Testis (tissue), 5 donors: ENCODE measurements at regions of chr9 and their contacts with region 1.

Region 1: DNA sequence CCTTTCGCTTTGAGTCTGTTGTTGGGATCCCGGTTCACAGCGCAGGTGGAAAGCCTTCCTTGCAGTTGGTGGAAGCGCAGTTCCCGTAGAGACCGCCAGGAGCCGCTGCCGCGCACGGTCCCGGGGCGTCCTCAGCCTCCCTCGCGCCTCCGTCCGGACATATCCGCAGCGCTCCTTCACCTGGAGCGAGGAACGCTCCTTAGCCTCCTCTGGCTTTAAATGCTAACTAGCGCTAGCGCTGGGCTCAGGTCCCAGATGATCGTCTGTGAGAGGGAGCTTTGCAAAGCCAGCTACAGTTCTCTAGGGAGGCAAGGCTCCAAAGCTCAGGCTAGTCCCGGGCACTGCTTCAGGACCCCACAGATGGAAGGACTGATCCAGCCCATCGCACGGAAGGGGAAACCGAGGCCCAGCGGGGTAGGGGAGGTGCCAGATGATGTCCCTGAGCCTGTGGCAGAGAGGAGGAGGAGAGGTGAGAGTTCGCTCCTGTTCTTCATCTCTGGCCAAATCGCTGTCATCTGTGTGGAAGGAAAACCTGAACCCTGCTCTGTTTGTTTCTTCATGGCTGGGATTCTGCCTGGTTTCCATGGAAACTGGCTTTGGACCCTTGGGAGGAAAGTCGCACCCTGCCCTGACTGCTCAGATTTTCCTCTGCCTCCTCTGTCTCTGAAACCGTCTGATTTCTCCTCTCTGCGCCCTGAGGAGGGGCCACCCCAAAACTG is 31.4 kb downstream of the COL15A1 start:
- DNase-seq: peak; percentile 90
- H3K4me3 ChIP-seq: peak overlapping the region in 1 of 2 donors; percentile 32
- H3K27ac ChIP-seq: peak overlapping the region in 1 of 2 donors; percentile 72
- H3K4me1 ChIP-seq: peaks cover 57% of the 10 kb centered on the region
- H3K27me3 ChIP-seq: no peaks in the 10 kb centered on the region
- CTCF ChIP-seq: peak; percentile 89 to 98 (median 91)
- POLR2A ChIP-seq: no peak

Region 2: DNA sequence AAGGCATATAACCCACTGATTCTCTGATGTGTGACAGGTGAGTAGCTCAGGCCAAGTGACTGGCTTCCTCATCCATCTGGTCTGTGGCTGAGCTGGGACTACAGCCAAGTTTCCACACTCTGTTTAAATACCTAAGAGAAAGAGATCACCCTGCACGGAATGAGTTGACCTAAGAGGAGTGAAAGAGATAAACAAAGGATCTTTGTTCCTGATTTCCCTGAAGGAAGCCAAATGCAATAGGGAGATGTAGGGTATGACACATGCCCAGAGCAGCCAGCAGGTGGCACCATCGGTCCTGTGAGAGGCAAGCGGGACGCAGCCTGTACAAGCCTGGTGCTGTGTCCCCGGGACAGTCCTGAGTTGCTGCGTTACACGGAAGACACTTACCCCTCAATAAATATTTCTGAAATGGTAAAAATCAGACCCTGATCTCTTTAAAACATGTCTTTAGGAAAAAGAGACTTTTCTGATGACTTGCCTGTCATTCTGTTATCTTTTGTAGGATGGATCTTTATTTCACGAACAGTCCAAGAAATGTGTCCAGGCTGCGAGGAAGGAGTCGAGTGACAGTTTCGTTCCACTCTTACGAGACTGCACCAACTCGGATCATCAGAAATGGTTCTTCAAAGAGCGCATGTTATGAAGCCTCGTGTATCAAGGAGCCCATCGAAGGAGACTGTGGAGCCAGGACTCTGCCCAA is 126.6 kb before region 1 on chr9:
- intact Hi-C with region 1: no loop called
- DNase-seq: peak; percentile 95
- H3K4me3 ChIP-seq: no peak overlapping the region
- H3K27ac ChIP-seq: no peak overlapping the region
- H3K4me1 ChIP-seq: peaks cover 4% of the 10 kb centered on the region
- H3K27me3 ChIP-seq: no peaks in the 10 kb centered on the region
- CTCF ChIP-seq: peak; percentile 66 to 85 (median 73)
- POLR2A ChIP-seq: no peak

Region 3: GRCh38 chr9:98867429-98868168 is 107.6 kb before region 1 on chr9:
- intact Hi-C with region 1: loop called (anchors 5 kb)
- DNase-seq: peak; percentile 78
- H3K4me3 ChIP-seq: no peak overlapping the region
- H3K27ac ChIP-seq: peak overlapping the region in 1 of 2 donors; percentile 60
- H3K4me1 ChIP-seq: peaks cover 18% of the 10 kb centered on the region
- H3K27me3 ChIP-seq: no peaks in the 10 kb centered on the region
- CTCF ChIP-seq: no peak
- POLR2A ChIP-seq: no peak